Naive thymus-derived CD4-positive, alpha-beta T cell (primary cell): ENCODE measurements at regions of chr20 and their contacts with region 1.

Region 1: DNA sequence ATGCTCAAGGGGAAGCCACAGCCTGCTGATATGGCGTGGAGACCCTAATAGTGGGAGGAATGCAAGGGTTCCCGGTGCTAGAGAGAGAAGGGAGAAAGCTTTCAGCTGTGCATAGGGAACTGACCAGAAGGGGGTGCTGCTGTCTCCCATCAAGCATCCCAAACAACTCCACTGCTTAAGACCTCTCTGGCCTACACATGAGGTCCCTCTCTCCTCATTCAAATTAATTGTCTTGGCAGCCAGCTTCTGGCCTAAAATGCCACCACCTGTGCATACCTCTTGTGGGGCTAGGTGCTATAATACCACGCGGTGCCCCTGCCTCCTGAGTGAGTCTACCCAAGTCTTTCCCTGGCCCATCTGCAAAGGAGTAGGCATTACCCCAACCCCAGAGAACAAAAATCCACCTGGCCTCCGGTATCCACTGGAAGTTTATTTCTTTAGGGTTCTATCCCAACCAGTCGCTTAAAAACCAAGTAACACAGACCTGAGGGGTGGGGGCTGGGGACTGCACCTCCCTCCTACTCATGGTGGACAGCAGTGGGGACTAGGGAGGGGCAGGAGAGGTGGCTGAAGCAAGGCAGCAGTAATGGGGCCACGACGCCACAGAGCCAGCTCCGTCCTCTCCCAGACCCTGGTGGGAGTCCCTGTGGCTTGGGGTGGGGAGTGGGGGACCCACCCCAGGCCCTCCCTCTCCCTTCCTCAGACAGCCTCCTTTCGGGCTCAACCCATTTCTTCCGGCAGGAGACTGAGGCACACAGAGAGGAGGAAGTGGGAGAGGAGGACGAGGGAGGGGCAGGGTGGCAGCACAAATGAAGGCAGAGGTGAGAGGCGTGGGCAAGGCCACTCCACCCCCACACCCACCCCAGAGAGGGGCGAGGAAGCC is 14.2 kb downstream of the ADISSP start:
- DNase-seq: peak in 8 of 9 donors; percentile 33 to 64 (median 56)
- ATAC-seq: peak; percentile 82
- H3K4me3 ChIP-seq: no peak overlapping the region
- H3K4me3 Mint-ChIP-seq: peak overlapping the region in 5 of 10 donors; percentile 32 to 83 (median 41)
- H3K27ac ChIP-seq: no peak overlapping the region
- H3K27ac Mint-ChIP-seq: peak overlapping the region in 5 of 9 donors; percentile 15 to 86 (median 47)
- H3K4me1 ChIP-seq: peaks cover 0 to 5% of the 10 kb centered on the region in 2 donors
- H3K4me1 Mint-ChIP-seq: peaks cover 0 to 15% (median 4%) of the 10 kb centered on the region in 7 donors
- H3K27me3 ChIP-seq: no peaks in the 10 kb centered on the region
- H3K27me3 Mint-ChIP-seq: no peaks in the 10 kb centered on the region

Region 2: DNA sequence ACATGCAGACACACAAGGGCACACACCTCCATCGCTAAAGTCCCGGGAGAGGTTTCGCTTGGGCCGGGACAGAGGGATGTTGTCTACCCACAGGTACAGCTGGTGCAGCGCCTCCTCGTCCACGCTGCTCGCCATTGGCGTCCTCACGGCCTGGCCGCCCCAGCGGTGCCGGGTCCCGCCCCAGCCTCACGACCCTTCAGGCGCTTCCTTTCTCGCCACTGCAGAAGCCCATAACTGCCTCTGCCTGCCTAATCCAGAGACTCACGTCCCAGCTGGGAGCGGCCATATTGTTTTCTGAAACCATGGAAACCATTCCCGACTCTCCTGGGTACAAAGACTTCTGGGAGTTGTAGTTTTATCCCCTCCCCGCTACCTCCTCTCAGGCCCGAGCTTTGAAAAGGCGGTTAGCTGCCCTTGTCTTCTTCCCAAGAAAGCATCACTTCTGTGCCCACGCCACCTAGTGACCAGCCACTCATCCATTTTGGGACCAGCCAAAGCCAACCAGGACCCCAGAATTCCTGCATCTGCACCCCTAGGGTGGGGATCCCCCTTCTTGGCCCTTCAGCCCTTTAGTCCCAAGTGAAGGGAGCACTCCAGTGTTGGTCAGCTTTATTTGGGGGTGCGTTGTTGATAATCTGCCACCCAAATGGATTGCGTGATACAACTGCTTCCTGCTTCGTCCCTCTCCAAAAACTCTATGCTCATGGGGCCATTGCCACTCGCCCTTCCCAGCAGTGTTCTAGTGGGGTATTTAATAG is 28.0 kb after region 1 on chr20 and contains the start of gene SPEF1:
- CTCF ChIA-PET with region 1: interaction called, 3 read pairs
- POLR2A ChIA-PET with region 1: no interaction called
- intact Hi-C with region 1: loop called in 1 of 2 experiments (anchors 1 kb)
- DNase-seq: peak in 5 of 9 donors; percentile 38 to 56 (median 50)
- ATAC-seq: peak; percentile 67
- H3K4me3 ChIP-seq: peak within 1 kb of the TSS; percentile 24
- H3K4me3 Mint-ChIP-seq: peak within 1 kb of the TSS; percentile 1 to 81 (median 61)
- H3K27ac ChIP-seq: peak within 1 kb of the TSS; percentile 28
- H3K27ac Mint-ChIP-seq: peak within 1 kb of the TSS in 7 of 9 donors; percentile 25 to 78 (median 67)
- H3K4me1 ChIP-seq: peaks cover 4 to 10% of the 10 kb centered on the region in 2 donors
- H3K4me1 Mint-ChIP-seq: peaks cover 22 to 51% (median 44%) of the 10 kb centered on the region in 7 donors
- H3K27me3 ChIP-seq: no peaks in the 10 kb centered on the region
- H3K27me3 Mint-ChIP-seq: peaks cover 0 to 29% (median 0%) of the 10 kb centered on the region in 5 donors
- total RNA-seq, gene SPEF1: 0.24 to 0.32 (median 0.29) TPM in 3 of 5 experiments, not detected in the others

Region 3: GRCh38 chr20:3828798-3829197 is 75.5 kb after region 1 on chr20:
- CTCF ChIA-PET with region 1: no interaction called
- POLR2A ChIA-PET with region 1: no interaction called
- intact Hi-C with region 1: no loop called
- DNase-seq: no peak
- ATAC-seq: no peak
- H3K4me3 ChIP-seq: no peak overlapping the region
- H3K4me3 Mint-ChIP-seq: no peak overlapping the region
- H3K27ac ChIP-seq: no peak overlapping the region
- H3K27ac Mint-ChIP-seq: no peak overlapping the region
- H3K4me1 ChIP-seq: no peaks in the 10 kb centered on the region
- H3K4me1 Mint-ChIP-seq: peaks cover 0 to 4% (median 0%) of the 10 kb centered on the region in 7 donors
- H3K27me3 ChIP-seq: no peaks in the 10 kb centered on the region
- H3K27me3 Mint-ChIP-seq: no peaks in the 10 kb centered on the region

Region 4: GRCh38 chr20:3846740-3847428 is 93.5 kb after region 1 on chr20 and contains the start of gene MAVS:
- CTCF ChIA-PET with region 1: interaction called, 3 read pairs
- POLR2A ChIA-PET with region 1: no interaction called
- intact Hi-C with region 1: loop called in 1 of 2 experiments (anchors 2 kb)
- DNase-seq: peak; percentile 76 to 93 (median 82)
- ATAC-seq: peak; percentile 100
- H3K4me3 ChIP-seq: peak within 1 kb of the TSS; percentile 86
- H3K4me3 Mint-ChIP-seq: peak within 1 kb of the TSS; percentile 85 to 93 (median 90)
- H3K27ac ChIP-seq: peak within 1 kb of the TSS; percentile 96
- H3K27ac Mint-ChIP-seq: peak within 1 kb of the TSS; percentile 59 to 95 (median 90)
- H3K4me1 ChIP-seq: peaks cover 0 to 10% of the 10 kb centered on the region in 2 donors
- H3K4me1 Mint-ChIP-seq: peaks cover 16 to 30% (median 27%) of the 10 kb centered on the region in 7 donors
- H3K27me3 ChIP-seq: no peaks in the 10 kb centered on the region
- H3K27me3 Mint-ChIP-seq: no peaks in the 10 kb centered on the region
- total RNA-seq, gene MAVS: 23.3 to 49.9 (median 41.5) TPM

Region 5: DNA sequence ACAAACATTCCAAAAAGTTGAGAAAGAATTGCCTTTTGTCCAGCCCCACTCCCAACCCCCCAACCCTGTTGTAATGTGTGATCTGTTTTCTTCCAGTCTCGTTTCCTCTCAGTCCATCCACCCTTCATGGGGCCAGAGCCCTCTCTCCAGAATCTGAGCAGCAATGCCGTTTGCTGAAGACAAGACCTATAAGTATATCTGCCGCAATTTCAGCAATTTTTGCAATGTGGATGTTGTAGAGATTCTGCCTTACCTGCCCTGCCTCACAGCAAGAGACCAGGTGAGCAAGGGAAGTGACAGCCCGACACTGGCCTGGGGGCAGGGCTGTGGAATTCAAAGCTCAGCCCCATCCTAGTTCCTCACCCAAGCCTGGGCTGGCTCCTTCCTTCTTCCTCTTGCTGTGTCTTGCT is 101.1 kb after region 1 on chr20:
- CTCF ChIA-PET with region 1: interaction called, 16 read pairs
- POLR2A ChIA-PET with region 1: interaction called, 3 read pairs
- intact Hi-C with region 1: loop called (anchors 1 kb)
- DNase-seq: no peak
- ATAC-seq: peak; percentile 48
- H3K4me3 ChIP-seq: no peak overlapping the region
- H3K4me3 Mint-ChIP-seq: no peak overlapping the region
- H3K27ac ChIP-seq: no peak overlapping the region
- H3K27ac Mint-ChIP-seq: peak overlapping the region in 3 of 9 donors; percentile 33 to 41 (median 33)
- H3K4me1 ChIP-seq: peaks cover 0 to 3% of the 10 kb centered on the region in 2 donors
- H3K4me1 Mint-ChIP-seq: peaks cover 12 to 22% (median 16%) of the 10 kb centered on the region in 7 donors
- H3K27me3 ChIP-seq: no peaks in the 10 kb centered on the region
- H3K27me3 Mint-ChIP-seq: no peaks in the 10 kb centered on the region

Region 6: DNA sequence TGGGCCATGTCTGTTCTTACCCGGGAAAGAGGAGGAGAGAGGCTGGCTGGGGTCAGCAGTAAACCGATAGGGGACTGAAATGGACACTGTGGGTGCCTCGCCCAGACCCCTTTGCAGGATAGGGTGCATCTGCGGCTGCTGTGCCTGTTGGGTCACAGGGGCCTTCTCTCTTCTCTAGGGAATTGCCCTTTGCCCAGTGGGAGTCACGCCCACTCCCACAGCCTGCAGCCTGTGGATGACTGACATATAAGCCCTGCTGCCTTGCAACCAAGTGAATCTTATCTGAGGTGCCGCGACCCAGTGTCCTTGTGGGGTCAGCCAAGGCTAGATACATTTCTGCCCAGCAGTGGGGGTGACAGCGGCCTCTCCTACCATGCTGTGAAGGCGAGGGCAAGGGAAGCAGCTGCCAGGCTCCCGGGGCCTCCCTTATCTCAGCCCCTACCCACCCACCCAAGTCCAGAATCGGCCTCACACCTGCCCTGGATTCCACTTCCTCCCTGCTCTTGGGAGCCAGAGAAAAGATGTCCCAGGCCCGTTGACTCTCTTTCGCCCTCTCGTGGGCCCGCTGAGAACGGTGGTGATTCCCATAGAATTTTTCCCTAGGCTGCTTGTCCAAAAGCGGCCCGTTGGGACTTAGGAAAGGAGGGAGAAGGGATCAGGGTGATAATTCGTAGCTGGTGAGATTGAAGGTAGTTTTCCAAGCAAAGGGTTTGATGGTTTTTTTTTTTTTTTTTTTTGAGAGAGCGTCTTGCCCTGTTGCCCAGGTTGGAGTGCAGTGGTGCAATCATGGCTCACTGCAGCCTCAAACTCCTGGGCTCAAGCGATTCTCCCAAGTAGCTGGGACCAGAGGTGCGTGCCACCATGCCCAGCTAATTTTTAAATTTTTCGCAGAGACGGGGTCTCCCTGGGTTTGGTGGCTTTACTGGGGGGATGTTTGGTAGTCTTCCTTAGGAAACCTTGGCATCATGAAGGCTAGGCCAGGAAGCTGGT is 338.4 kb after region 1 on chr20:
- CTCF ChIA-PET with region 1: interaction called, 4 read pairs
- POLR2A ChIA-PET with region 1: no interaction called
- intact Hi-C with region 1: loop called in 1 of 2 experiments (anchors 2 kb)
- DNase-seq: peak in 6 of 9 donors; percentile 6 to 62 (median 18)
- ATAC-seq: peak; percentile 51
- H3K4me3 ChIP-seq: no peak overlapping the region
- H3K4me3 Mint-ChIP-seq: no peak overlapping the region
- H3K27ac ChIP-seq: no peak overlapping the region
- H3K27ac Mint-ChIP-seq: peak overlapping the region in 1 of 9 donors; percentile 37
- H3K4me1 ChIP-seq: no peaks in the 10 kb centered on the region
- H3K4me1 Mint-ChIP-seq: peaks cover 0 to 5% (median 0%) of the 10 kb centered on the region in 7 donors
- H3K27me3 ChIP-seq: no peaks in the 10 kb centered on the region
- H3K27me3 Mint-ChIP-seq: peaks cover 9 to 23% (median 11%) of the 10 kb centered on the region in 5 donors